ENCODE measurements at regions of chr1 and their contacts with region 1.

Region 1: DNA sequence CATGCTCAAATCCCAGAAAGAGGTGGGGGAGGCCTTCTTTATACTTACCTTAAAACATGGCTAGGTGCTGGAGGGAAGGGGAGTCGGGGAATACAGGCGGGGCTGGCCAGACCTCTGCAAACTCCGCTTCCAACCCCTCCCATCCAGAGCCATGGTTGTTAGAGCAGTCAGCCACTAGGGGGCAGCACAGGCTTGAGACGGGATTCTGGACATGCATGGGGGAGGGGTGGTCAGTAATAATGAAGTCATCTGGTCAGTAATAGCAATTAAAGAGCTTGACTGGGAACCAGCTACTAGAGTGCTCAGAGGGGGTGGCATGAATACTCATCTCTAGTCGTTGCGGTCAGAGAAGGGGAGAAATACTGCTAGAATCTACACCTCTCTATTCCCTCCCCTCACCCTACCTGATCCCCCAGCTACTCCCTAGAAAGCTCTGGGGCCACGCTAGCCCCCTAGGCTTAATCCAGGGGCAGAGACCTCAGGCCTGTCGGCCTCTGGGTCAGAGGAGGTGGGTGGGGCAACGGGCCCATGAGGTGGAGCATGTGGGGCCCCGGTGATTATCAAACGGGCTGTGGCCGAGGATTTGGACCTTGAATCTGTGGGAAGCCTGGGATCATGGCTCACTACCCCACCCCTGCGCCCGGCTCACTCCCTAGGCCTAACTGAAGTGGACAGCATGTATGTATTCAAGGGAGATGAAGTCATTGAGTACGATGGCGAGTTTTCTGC is 2.9 kb downstream of the CASQ1 start:
- DNase-seq: peak; percentile 90
- H3K4me3 ChIP-seq: no peak overlapping the region
- H3K27ac ChIP-seq: no peak overlapping the region
- H3K4me1 ChIP-seq: no peaks in the 10 kb centered on the region
- H3K27me3 ChIP-seq: no peaks in the 10 kb centered on the region
- CTCF ChIP-seq: peak; percentile 88

Region 2: GRCh38 chr1:160101037-160101716 is 92.1 kb before region 1 on chr1:
- intact Hi-C with region 1: loop called (anchors 10 kb)
- DNase-seq: peak; percentile 67
- H3K4me3 ChIP-seq: no peak overlapping the region
- H3K27ac ChIP-seq: no peak overlapping the region
- H3K4me1 ChIP-seq: peaks cover 13% of the 10 kb centered on the region
- H3K27me3 ChIP-seq: no peaks in the 10 kb centered on the region
- CTCF ChIP-seq: peak; percentile 82

Region 3: DNA sequence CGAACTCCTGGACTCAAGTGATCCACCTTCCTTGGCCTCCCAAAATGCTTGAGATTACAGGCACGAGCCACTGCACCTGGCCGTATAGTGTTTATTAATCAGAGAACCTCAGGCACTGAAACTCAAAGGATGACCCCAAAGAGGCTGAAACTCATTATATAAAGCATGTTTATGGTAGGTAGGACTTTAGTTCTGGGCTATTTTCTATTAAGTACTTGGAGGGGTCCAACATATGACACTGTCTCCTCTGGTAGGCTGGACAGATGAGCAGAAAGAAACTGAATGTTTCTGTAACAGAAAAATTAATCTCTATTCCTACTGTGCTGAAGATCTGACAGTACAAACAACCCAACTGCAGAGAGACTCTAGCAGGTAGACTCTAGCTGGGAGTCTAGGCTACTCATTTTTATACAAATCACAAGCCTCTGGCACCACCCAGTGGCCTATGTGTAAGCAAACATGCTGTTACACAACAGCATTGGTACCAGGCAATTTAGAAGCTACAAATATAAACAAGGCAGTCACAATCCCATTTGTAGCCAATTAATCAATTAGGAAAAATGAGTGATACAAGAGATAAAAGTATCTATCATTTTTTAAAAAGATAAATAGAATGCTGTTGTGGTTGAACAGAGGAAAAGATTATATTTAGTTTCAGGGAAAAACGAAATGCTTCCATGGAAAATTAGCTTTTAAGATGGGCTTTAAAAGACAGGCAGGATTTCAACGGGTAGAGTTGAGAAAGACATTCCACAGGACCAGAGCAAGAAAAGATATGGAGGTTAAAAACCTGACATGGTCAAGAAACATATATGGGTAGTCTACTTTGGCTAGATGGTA is 58.7 kb after region 1 on chr1:
- intact Hi-C with region 1: loop called (anchors 2 kb)
- DNase-seq: peak; percentile 55
- H3K4me3 ChIP-seq: no peak overlapping the region
- H3K27ac ChIP-seq: no peak overlapping the region
- H3K4me1 ChIP-seq: no peaks in the 10 kb centered on the region
- H3K27me3 ChIP-seq: no peaks in the 10 kb centered on the region
- CTCF ChIP-seq: peak; percentile 65

Region 4: GRCh38 chr1:160291248-160292220 is 98.3 kb after region 1 on chr1:
- intact Hi-C with region 1: loop called (anchors 5 kb)
- DNase-seq: peak; percentile 66
- H3K4me3 ChIP-seq: no peak overlapping the region
- H3K27ac ChIP-seq: no peak overlapping the region
- H3K4me1 ChIP-seq: no peaks in the 10 kb centered on the region
- H3K27me3 ChIP-seq: no peaks in the 10 kb centered on the region
- CTCF ChIP-seq: peak; percentile 79

Region 5: GRCh38 chr1:160342953-160343869 is 150.0 kb after region 1 on chr1 and contains the starts of genes COPA and NCSTN:
- intact Hi-C with region 1: no loop called
- DNase-seq: peak; percentile 96
- H3K4me3 ChIP-seq: peak within 1 kb of the TSS; percentile 88
- H3K27ac ChIP-seq: peak within 1 kb of the TSS; percentile 73
- H3K4me1 ChIP-seq: peaks cover 9% of the 10 kb centered on the region
- H3K27me3 ChIP-seq: no peaks in the 10 kb centered on the region
- CTCF ChIP-seq: no peak
- total RNA-seq, gene COPA: 154 to 163 TPM
- total RNA-seq, gene NCSTN: 83.5 to 88.0 TPM

Region 6: GRCh38 chr1:160376525-160377131 is 183.4 kb after region 1 on chr1:
- intact Hi-C with region 1: loop called (anchors 5 kb)
- DNase-seq: peak; percentile 37
- H3K4me3 ChIP-seq: no peak overlapping the region
- H3K27ac ChIP-seq: no peak overlapping the region
- H3K4me1 ChIP-seq: peaks cover 9% of the 10 kb centered on the region
- H3K27me3 ChIP-seq: no peaks in the 10 kb centered on the region
- CTCF ChIP-seq: peak; percentile 89

Measured in colonic mucosa (tissue), 4 donors.